Right cardiac atrium (tissue), 5 donors: ENCODE measurements at regions of chr16 and their contacts with region 1.

Region 1: GRCh38 chr16:89708441-89708931 is 7.0 kb upstream of the SPATA2L start:
- DNase-seq: peak in 1 of 3 donors; percentile 48
- ATAC-seq: no peak
- H3K4me3 ChIP-seq: no peak overlapping the region
- H3K27ac ChIP-seq: no peak overlapping the region
- H3K4me1 ChIP-seq: no peaks in the 10 kb centered on the region
- H3K27me3 ChIP-seq: no peaks in the 10 kb centered on the region

Region 2: GRCh38 chr16:88983771-88984687 is 724.5 kb before region 1 on chr16:
- intact Hi-C with region 1: no loop called
- DNase-seq: peak; percentile 8 to 46 (median 36)
- ATAC-seq: no peak
- H3K4me3 ChIP-seq: no peak overlapping the region
- H3K27ac ChIP-seq: no peak overlapping the region
- H3K4me1 ChIP-seq: no peaks in the 10 kb centered on the region
- H3K27me3 ChIP-seq: no peaks in the 10 kb centered on the region

Region 3: GRCh38 chr16:89599451-89599858 is 109.0 kb before region 1 on chr16:
- intact Hi-C with region 1: no loop called
- DNase-seq: no peak
- ATAC-seq: no peak
- H3K4me3 ChIP-seq: no peak overlapping the region
- H3K27ac ChIP-seq: no peak overlapping the region
- H3K4me1 ChIP-seq: no peaks in the 10 kb centered on the region
- H3K27me3 ChIP-seq: no peaks in the 10 kb centered on the region

Region 4: GRCh38 chr16:89613231-89613953 is 95.1 kb before region 1 on chr16 and contains the start of gene DPEP1:
- intact Hi-C with region 1: no loop called
- DNase-seq: no peak
- ATAC-seq: peak in 1 of 2 donors; percentile 31
- H3K4me3 ChIP-seq: no peak within 1 kb of the TSS
- H3K27ac ChIP-seq: no peak within 1 kb of the TSS
- H3K4me1 ChIP-seq: no peaks in the 10 kb centered on the region
- H3K27me3 ChIP-seq: no peaks in the 10 kb centered on the region
- total RNA-seq, gene DPEP1: 0.31 to 0.53 TPM in 2 of 4 donors, not detected in the others

Region 5: DNA sequence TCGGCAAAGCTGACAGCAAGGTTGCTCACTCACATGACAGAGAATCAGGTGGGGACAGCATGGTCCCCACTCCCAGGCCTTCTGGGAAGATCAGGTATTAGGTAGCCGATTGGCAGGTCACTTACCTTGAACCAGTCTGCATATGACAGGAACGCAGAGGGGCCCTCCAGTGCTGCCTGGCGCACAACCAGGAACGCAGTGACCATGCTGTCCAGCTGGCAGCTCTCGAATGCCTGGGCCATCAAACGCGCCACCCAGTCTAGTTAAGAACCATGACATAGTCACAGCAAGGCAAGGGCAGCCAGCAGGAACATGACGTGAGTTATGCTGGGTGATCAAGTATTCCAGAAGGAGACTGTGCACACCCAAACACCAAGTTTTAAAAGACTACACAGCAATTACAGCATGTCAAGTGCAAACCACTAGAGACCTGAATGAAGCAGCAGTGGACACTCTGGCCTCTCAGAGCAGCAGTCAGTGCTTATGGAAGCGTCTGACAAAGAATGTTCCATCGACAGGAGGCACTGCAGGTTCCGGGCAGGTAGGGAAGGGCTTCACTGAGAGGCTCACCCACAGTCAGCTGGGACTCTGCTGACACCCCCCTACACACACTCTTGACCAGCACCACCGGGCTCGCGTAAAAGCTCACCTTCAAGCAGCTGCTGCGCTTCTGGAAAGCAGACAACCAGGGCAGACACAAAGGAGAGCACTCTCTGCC is 83.0 kb after region 1 on chr16:
- intact Hi-C with region 1: loop called in 2 of 4 experiments (anchors 5 to 10 kb)
- DNase-seq: peak in 2 of 3 donors; percentile 34 to 68
- ATAC-seq: peak; percentile 22 to 56
- H3K4me3 ChIP-seq: no peak overlapping the region
- H3K27ac ChIP-seq: no peak overlapping the region
- H3K4me1 ChIP-seq: no peaks in the 10 kb centered on the region
- H3K27me3 ChIP-seq: no peaks in the 10 kb centered on the region